CD8-positive, alpha-beta memory T cell (primary cell): ENCODE measurements at regions of chr6 and their contacts with region 1.

Region 1: DNA sequence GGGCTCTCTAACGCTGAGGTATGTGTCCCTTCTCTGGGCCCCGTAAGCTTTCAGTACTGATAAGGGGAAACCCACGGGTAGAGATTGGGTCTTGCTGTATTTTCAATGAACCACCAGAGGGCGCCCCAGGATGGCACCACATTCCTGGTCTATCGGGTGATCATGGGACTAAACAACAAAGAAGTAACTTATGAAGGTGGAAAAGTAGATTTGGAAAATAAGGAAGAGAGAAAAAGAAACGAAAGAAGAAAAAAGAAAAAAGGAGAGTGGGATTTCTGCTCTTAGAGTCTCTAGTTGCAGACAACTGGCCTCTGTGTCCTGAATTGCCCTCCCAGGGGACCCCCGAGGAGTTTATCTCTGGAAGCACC is 93.8 kb downstream of the GMPR start:
- DNase-seq: peak; percentile 70 to 83 (median 71)
- H3K4me3 ChIP-seq: no peak overlapping the region
- H3K4me3 Mint-ChIP-seq: no peak overlapping the region
- H3K27ac ChIP-seq: no peak overlapping the region
- H3K27ac Mint-ChIP-seq: no peak overlapping the region
- H3K4me1 ChIP-seq: peaks cover 13% of the 10 kb centered on the region
- H3K4me1 Mint-ChIP-seq: peaks cover 6 to 16% (median 16%) of the 10 kb centered on the region in 3 donors
- H3K27me3 ChIP-seq: no peaks in the 10 kb centered on the region
- H3K27me3 Mint-ChIP-seq: peaks cover 0 to 2% of the 10 kb centered on the region in 2 donors

Region 2: DNA sequence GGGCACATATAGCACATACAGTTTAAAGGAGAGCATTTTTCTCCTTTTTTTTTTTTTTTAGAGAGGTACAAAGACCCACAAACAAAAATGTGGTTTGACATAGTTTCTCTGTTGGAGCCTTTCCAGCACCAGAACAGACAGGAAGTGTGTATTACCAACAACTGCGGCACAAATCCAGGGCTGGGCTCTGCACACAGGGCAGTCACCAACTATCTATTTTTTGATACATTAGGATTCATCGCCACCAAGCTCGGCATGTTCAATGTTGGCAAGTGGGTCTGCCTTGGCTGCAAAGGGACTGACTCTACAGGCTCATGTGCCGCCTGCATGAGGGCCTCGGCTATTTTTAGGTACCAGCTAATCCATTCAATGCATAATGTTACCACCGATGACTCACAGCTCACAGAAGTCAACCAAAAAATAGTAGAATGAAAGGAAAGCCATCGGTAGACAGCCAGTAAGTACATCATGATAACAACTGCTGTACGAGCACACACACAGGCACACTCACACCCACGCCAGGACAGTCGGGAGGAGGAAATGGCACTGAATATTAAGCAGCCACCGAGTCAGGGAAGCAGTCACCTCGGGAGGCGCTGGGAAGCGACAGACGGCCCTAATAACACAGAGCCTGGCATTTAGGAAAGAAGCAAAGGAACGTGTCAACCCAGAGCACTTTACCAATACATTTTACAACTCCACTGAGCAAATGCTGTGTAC is 12.2 kb before region 1 on chr6:
- CTCF ChIA-PET with region 1: interaction called, 120 read pairs
- POLR2A ChIA-PET with region 1: interaction called, 4 read pairs
- DNase-seq: peak; percentile 55 to 85 (median 82)
- H3K4me3 ChIP-seq: peak overlapping the region; percentile 55
- H3K4me3 Mint-ChIP-seq: peak overlapping the region; percentile 57 to 83 (median 80)
- H3K27ac ChIP-seq: peak overlapping the region; percentile 78
- H3K27ac Mint-ChIP-seq: peak overlapping the region; percentile 91 to 100 (median 95)
- H3K4me1 ChIP-seq: peaks cover 71% of the 10 kb centered on the region
- H3K4me1 Mint-ChIP-seq: peaks cover 83 to 94% (median 88%) of the 10 kb centered on the region in 3 donors
- H3K27me3 ChIP-seq: no peaks in the 10 kb centered on the region
- H3K27me3 Mint-ChIP-seq: peaks cover 0 to 1% of the 10 kb centered on the region in 2 donors

Region 3: GRCh38 chr6:16770701-16771569 is 438.8 kb after region 1 on chr6:
- CTCF ChIA-PET with region 1: interaction called, 28 read pairs
- POLR2A ChIA-PET with region 1: no interaction called
- DNase-seq: peak; percentile 67 to 83 (median 73)
- H3K4me3 ChIP-seq: no peak overlapping the region
- H3K4me3 Mint-ChIP-seq: peak overlapping the region in 4 of 7 donors; percentile 47 to 79 (median 62)
- H3K27ac ChIP-seq: no peak overlapping the region
- H3K27ac Mint-ChIP-seq: peak overlapping the region; percentile 57 to 96 (median 88)
- H3K4me1 ChIP-seq: peaks cover 35% of the 10 kb centered on the region
- H3K4me1 Mint-ChIP-seq: peaks cover 38 to 62% (median 61%) of the 10 kb centered on the region in 3 donors
- H3K27me3 ChIP-seq: no peaks in the 10 kb centered on the region
- H3K27me3 Mint-ChIP-seq: no peaks in the 10 kb centered on the region